Aorta (tissue), 5 donors: ENCODE measurements at regions of chr1 and their contacts with region 1.

Region 1: DNA sequence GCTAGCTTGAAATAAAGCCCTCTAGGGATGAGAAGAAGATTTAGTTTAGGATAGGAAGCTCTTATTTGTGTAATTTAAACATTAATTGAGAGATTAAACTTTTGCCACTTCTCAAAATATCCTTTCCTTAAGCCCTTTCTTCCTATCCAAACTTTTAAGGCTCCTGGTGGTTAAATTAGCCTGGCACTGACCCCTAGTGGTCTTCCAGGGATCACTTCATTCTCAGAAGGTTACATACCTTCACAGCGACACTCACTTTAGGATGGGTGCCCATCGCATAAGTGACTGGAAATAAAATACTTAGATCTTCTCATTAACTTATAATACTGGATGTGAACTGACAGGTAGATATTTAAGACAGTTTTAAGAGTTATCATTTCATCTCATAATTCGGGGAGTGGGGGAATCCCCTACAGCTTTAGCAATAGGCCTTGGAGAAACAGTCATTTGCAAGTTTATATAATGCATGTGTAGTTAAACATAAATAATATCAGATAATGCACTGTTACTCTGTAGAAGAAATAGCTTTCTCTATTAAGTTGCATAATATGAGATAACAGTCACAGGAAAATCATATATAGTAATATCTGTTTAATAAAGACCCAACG is 7.4 kb downstream of the LHX9 start:
- DNase-seq: no peak
- ATAC-seq: no peak
- H3K4me3 ChIP-seq: no peak overlapping the region
- H3K27ac ChIP-seq: no peak overlapping the region
- H3K4me1 ChIP-seq: no peaks in the 10 kb centered on the region
- H3K27me3 ChIP-seq: peaks cover 0 to 4% of the 10 kb centered on the region in 2 donors

Region 2: GRCh38 chr1:197614916-197615692 is 309.5 kb before region 1 on chr1:
- intact Hi-C with region 1: loop called (anchors 5 kb)
- DNase-seq: no peak
- ATAC-seq: peak; percentile 66
- H3K4me3 ChIP-seq: no peak overlapping the region
- H3K27ac ChIP-seq: no peak overlapping the region
- H3K4me1 ChIP-seq: no peaks in the 10 kb centered on the region
- H3K27me3 ChIP-seq: no peaks in the 10 kb centered on the region

Region 3: GRCh38 chr1:197736644-197737043 is 188.0 kb before region 1 on chr1:
- intact Hi-C with region 1: no loop called
- DNase-seq: no peak
- ATAC-seq: no peak
- H3K4me3 ChIP-seq: no peak overlapping the region
- H3K27ac ChIP-seq: no peak overlapping the region
- H3K4me1 ChIP-seq: no peaks in the 10 kb centered on the region
- H3K27me3 ChIP-seq: no peaks in the 10 kb centered on the region

Region 4: DNA sequence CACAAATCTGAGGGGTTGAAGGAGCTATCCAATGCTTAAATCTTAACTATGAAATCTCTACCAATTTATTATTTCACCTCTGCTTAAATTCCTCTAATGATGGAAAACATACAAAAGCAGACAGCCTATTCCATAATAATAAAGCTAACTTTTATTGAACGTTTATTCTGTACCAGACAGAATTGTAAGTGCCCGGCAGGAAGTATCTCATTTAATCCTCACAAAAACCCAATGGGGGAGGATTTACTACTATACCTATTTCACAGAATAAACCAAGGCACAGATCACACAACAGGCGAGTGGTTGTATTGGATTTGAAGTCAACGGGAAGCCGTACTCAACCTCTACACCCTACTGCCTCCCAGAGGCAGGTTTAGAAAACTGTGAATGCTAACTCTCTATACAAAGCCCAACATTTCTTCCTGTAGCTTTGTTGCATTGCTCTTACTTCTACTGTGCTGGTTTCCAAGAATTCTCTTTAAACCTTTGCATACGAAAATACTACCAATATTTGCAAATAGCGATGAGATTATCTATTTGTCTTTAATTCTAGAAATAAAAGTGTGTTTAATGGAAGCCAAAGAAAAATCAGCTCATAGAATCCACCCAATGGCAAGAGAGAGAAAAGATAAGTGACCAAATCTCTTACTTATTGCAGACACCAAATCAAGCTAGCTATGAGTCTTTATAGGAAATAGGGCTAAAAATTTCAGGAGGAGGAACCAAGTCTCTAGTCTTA is 55.7 kb before region 1 on chr1:
- intact Hi-C with region 1: no loop called
- DNase-seq: no peak
- ATAC-seq: peak; percentile 67
- H3K4me3 ChIP-seq: no peak overlapping the region
- H3K27ac ChIP-seq: no peak overlapping the region
- H3K4me1 ChIP-seq: no peaks in the 10 kb centered on the region
- H3K27me3 ChIP-seq: no peaks in the 10 kb centered on the region